ENCODE measurements at regions of chr10 and their contacts with region 1.

Region 1: GRCh38 chr10:77846718-77847630 is 79.6 kb downstream of the DLG5 start:
- DNase-seq: peak; percentile 84
- ATAC-seq: peak; percentile 87

Region 2: GRCh38 chr10:77989081-77989724 is 142.2 kb after region 1 on chr10:
- intact Hi-C with region 1: loop called (anchors 5 kb)
- DNase-seq: peak; percentile 73
- ATAC-seq: peak; percentile 99

Region 3: GRCh38 chr10:78634389-78634815 is 787.4 kb after region 1 on chr10:
- intact Hi-C with region 1: no loop called
- DNase-seq: no peak
- ATAC-seq: peak; percentile 54